Vagina (tissue), 2 donors: ENCODE measurements at regions of chr1 and their contacts with region 1.

Region 1: GRCh38 chr1:211973541-211973940 is 61.8 kb downstream of the INTS7 start:
- DNase-seq: no peak
- H3K4me3 ChIP-seq: no peak overlapping the region
- H3K27ac ChIP-seq: no peak overlapping the region
- H3K4me1 ChIP-seq: peaks cover 8% of the 10 kb centered on the region
- H3K27me3 ChIP-seq: no peaks in the 10 kb centered on the region
- CTCF ChIP-seq: no peak
- POLR2A ChIP-seq: no peak

Region 2: DNA sequence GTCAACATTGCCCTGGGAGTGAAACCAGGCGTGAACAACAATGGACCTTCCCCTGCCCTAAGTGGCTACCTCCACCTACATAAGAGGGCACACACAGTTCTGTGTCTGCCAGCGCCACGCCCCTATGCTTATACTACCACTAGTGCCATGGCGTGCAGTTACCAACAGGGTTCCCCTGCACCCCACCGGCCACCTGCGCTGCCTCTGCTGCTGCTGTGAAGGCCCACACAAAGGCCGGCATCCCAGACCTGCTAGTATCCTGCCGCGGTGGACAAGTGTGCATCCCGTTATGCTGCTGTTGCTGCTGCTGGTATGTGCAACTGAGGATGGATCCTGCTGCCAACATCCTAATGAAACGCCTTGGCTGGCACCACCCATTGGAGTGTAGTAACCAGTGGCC is 13.9 kb before region 1 on chr1:
- intact Hi-C with region 1: loop called (anchors 2 kb)
- DNase-seq: no peak
- H3K4me3 ChIP-seq: no peak overlapping the region
- H3K27ac ChIP-seq: no peak overlapping the region
- H3K4me1 ChIP-seq: no peaks in the 10 kb centered on the region
- H3K27me3 ChIP-seq: no peaks in the 10 kb centered on the region
- CTCF ChIP-seq: no peak
- POLR2A ChIP-seq: no peak